ENCODE measurements at regions of chr17 and their contacts with region 1.

Region 1: GRCh38 chr17:76671123-76671911 is 27.8 kb upstream of the ST6GALNAC1 start:
- DNase-seq: peak; percentile 97 to 99 (median 98)
- ATAC-seq: peak; percentile 97
- H3K4me3 ChIP-seq: peak overlapping the region; percentile 60
- H3K27ac ChIP-seq: peak overlapping the region; percentile 88
- H3K4me1 ChIP-seq: peaks cover 30 to 37% of the 10 kb centered on the region in 2 experiments; a peak in 4 of 5 replicates
- H3K27me3 ChIP-seq: no peaks in the 10 kb centered on the region
- CTCF ChIP-seq: no peak
- EP300 ChIP-seq: no peak
- POLR2A ChIP-seq: peak; percentile 80
- RAD21 ChIP-seq: no peak

Region 2: DNA sequence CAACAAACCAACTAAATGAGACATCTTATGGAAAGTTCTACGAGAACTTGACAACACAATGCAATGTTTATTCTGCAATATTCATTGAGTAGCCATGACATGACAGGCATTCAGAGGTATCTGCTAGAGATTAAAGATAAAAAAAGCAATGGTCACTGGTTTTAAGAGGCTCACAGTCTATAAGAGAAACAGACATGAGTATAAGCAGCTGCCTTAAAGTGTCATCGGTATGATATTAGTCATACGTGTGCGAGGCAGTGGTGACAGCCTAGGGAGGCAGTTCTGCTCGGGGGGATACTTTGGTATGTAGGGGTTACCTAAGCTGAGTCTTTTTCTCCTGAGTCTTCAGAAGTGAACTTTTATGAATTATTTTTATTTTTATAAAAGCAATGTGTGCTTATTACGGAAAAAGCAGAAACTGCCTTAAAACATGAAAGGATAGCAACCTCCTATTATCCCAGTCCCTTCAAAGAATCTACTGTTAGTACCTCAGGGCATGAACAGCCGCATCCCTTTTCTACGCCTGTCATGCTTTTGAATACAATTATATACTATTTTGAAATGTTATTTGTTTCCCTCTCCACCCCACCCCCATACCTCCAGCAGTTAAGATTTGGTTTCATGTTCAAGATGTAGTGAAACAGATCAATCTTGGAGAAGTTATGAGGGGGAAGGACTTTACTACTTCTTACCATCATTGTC is 35.5 kb before region 1 on chr17:
- CTCF ChIA-PET with region 1: no interaction called
- POLR2A ChIA-PET with region 1: interaction called, 3 read pairs
- in situ Hi-C with region 1: no loop called
- intact Hi-C with region 1: loop called (anchors 5 kb)
- DNase-seq: no peak
- ATAC-seq: no peak
- H3K4me3 ChIP-seq: no peak overlapping the region
- H3K27ac ChIP-seq: 0 out of 3 replicates have a peak overlapping the region, but pooled peaks have one; percentile 22
- H3K4me1 ChIP-seq: peaks cover 32 to 38% of the 10 kb centered on the region in 2 experiments; a peak in 4 of 5 replicates
- H3K27me3 ChIP-seq: no peaks in the 10 kb centered on the region
- CTCF ChIP-seq: no peak
- EP300 ChIP-seq: no peak
- POLR2A ChIP-seq: 0 out of 2 replicates have a peak, but pooled peaks have one; percentile 21
- RAD21 ChIP-seq: no peak

Measured in K562 (cell line).